Activated CD4-positive, alpha-beta T cell treated with anti-CD3 and anti-CD28 coated beads for 36 hours (primary cell): ENCODE measurements at regions of chr18 and their contacts with region 1.

Region 1: DNA sequence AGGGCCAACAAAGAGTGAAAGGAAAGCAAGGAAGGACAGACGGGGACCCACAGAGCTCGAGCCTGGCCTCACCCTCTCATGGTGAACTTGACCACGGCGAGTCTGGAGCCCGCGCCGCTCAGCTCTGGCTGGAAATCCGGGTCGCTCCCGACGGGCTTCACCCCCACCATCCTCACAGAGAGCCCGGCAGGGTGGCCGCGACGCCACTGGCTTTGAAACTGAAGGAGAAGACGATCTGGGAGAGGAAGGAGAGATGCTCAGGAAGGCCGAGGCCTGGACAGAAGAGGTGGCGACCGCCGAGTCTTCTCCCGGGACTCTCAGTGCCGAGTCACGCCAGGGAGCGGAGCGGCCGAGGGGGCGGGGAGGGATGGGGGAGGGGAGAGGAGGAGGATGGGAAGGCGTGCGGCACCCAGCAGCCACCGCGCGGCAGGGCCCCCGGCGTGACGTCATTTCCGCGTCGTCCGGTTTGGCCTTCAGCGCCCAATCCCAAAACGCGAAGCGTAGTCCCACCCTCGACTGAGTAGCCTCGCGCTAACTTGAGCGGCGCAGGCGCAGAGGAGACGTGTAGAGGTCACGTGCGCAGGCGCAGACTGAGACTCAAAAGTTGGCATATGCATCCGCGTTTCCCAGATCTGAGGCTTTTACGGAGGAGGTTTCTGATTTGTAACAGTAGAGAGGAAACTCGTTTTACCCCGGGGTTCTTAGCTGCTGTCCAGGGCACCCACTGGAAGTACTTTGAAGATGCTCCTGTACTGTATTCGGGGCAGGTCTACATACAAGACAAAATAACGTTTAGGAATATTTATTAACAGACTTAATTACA is at the start of gene TXNL1:
- DNase-seq: peak; percentile 100
- ATAC-seq: peak; percentile 98
- H3K4me3 Mint-ChIP-seq: peak within 1 kb of the TSS; percentile 98
- H3K27ac Mint-ChIP-seq: peak within 1 kb of the TSS; percentile 96
- H3K4me1 Mint-ChIP-seq: peaks cover 41% of the 10 kb centered on the region
- H3K27me3 Mint-ChIP-seq: no peaks in the 10 kb centered on the region
- total RNA-seq, gene TXNL1: 75.3 to 87.0 TPM

Region 2: DNA sequence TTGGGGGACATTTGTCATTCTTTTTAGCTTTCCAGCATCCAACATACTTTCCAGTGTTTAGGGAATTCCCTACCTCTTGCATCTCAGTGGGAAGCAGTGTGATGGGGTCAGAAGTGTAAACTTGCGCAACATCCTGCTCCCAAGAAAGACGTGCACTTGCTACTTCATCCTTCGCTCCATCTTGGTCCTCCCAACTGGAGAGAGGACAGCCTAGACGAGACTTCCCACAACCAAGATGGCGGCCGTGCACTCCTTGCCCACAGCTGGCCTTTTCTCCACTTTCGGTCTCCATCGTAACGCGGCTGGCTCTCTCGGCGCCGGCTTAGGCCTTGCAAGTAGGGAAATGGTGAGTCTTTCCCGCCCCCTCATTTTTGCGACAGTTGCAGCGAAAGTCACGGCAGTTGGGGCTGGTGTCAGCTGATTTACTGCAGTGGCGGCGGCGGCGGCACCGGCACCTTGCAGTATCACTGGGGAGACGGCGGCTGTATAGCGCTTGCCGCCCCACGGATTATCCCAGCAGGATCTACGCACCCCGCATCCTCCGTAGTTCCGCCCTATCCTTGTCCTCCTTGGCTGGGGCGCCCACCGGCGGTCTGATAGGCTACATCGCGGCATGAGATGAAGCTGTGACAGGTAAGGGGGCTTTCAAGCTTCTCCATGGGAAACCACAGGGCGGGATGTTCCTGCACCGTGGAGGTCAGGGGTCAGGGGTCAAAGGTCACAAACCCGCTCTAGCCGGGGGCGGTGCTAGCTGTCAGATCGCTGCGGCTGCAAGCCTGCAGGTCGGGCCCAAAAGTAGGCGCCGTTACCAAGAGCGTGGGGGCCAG is 12.7 kb after region 1 on chr18 and contains the start of gene WDR7:
- CTCF ChIA-PET with region 1: interaction called, 19 read pairs
- POLR2A ChIA-PET with region 1: interaction called, 7 read pairs
- intact Hi-C with region 1: loop called (anchors 1 kb)
- DNase-seq: peak; percentile 98
- ATAC-seq: peak; percentile 93
- H3K4me3 Mint-ChIP-seq: peak within 1 kb of the TSS; percentile 89
- H3K27ac Mint-ChIP-seq: peak within 1 kb of the TSS; percentile 90
- H3K4me1 Mint-ChIP-seq: peaks cover 42% of the 10 kb centered on the region
- H3K27me3 Mint-ChIP-seq: no peaks in the 10 kb centered on the region
- total RNA-seq, gene WDR7: 21.5 to 23.1 TPM

Region 3: GRCh38 chr18:57586251-57587049 is 948.0 kb after region 1 on chr18 and contains the start of gene FECH:
- CTCF ChIA-PET with region 1: no interaction called
- POLR2A ChIA-PET with region 1: no interaction called
- intact Hi-C with region 1: loop called in 1 of 2 experiments (anchors 10 kb)
- DNase-seq: peak; percentile 76
- ATAC-seq: peak; percentile 92
- H3K4me3 Mint-ChIP-seq: peak within 1 kb of the TSS; percentile 80
- H3K27ac Mint-ChIP-seq: peak within 1 kb of the TSS; percentile 74
- H3K4me1 Mint-ChIP-seq: peaks cover 21% of the 10 kb centered on the region
- H3K27me3 Mint-ChIP-seq: no peaks in the 10 kb centered on the region
- total RNA-seq, gene FECH: 23.3 to 28.8 TPM